ENCODE measurements at regions of chr3 and their contacts with region 1.

Region 1: GRCh38 chr3:149717391-149718056 is 34.8 kb downstream of the COMMD2 start:
- DNase-seq: peak; percentile 61
- ATAC-seq: no peak
- H3K4me3 Mint-ChIP-seq: peak overlapping the region; percentile 10
- H3K27ac Mint-ChIP-seq: peak overlapping the region; percentile 47
- H3K4me1 Mint-ChIP-seq: peaks cover 15% of the 10 kb centered on the region
- H3K27me3 Mint-ChIP-seq: no peaks in the 10 kb centered on the region

Region 2: GRCh38 chr3:149532489-149533180 is 184.9 kb before region 1 on chr3:
- CTCF ChIA-PET with region 1: interaction called, 17 read pairs
- DNase-seq: no peak
- ATAC-seq: no peak
- H3K4me3 Mint-ChIP-seq: peak overlapping the region; percentile 3
- H3K27ac Mint-ChIP-seq: no peak overlapping the region
- H3K4me1 Mint-ChIP-seq: peaks cover 9% of the 10 kb centered on the region
- H3K27me3 Mint-ChIP-seq: peaks cover 3% of the 10 kb centered on the region

Region 3: GRCh38 chr3:149603126-149604074 is 114.1 kb before region 1 on chr3:
- CTCF ChIA-PET with region 1: no interaction called
- DNase-seq: no peak
- ATAC-seq: no peak
- H3K4me3 Mint-ChIP-seq: no peak overlapping the region
- H3K27ac Mint-ChIP-seq: no peak overlapping the region
- H3K4me1 Mint-ChIP-seq: peaks cover 1% of the 10 kb centered on the region
- H3K27me3 Mint-ChIP-seq: no peaks in the 10 kb centered on the region

Region 4: GRCh38 chr3:149886957-149887356 is 169.4 kb after region 1 on chr3:
- CTCF ChIA-PET with region 1: no interaction called
- DNase-seq: no peak
- ATAC-seq: no peak
- H3K4me3 Mint-ChIP-seq: no peak overlapping the region
- H3K27ac Mint-ChIP-seq: no peak overlapping the region
- H3K4me1 Mint-ChIP-seq: peaks cover 7% of the 10 kb centered on the region
- H3K27me3 Mint-ChIP-seq: no peaks in the 10 kb centered on the region

Region 5: GRCh38 chr3:150168698-150169097 is 451.2 kb after region 1 on chr3:
- CTCF ChIA-PET with region 1: no interaction called
- DNase-seq: no peak
- ATAC-seq: no peak
- H3K4me3 Mint-ChIP-seq: no peak overlapping the region
- H3K27ac Mint-ChIP-seq: no peak overlapping the region
- H3K4me1 Mint-ChIP-seq: peaks cover 8% of the 10 kb centered on the region
- H3K27me3 Mint-ChIP-seq: peaks cover 9% of the 10 kb centered on the region

Measured in activated CD8-positive, alpha-beta memory T cell treated with anti-CD3 and anti-CD28 coated beads, Interleukin-2, amount 10 ng/mL, durations not matched to agents 7 days and 5 days (primary cell).